A673 (cell line): ENCODE measurements at regions of chr3 and their contacts with region 1.

Region 1: GRCh38 chr3:55591888-55592287 is 104.8 kb upstream of the WNT5A start:
- DNase-seq: no peak
- H3K4me3 ChIP-seq: no peak overlapping the region
- H3K27ac ChIP-seq: no peak overlapping the region
- H3K4me1 ChIP-seq: peaks cover 12% of the 10 kb centered on the region
- H3K27me3 ChIP-seq: no peaks in the 10 kb centered on the region
- CTCF ChIP-seq: no peak

Region 2: GRCh38 chr3:54843352-54843751 is 748.5 kb before region 1 on chr3:
- CTCF ChIA-PET with region 1: interaction called, 10 read pairs
- POLR2A ChIA-PET with region 1: no interaction called
- intact Hi-C with region 1: no loop called
- DNase-seq: no peak
- H3K4me3 ChIP-seq: no peak overlapping the region
- H3K27ac ChIP-seq: no peak overlapping the region
- H3K4me1 ChIP-seq: no peaks in the 10 kb centered on the region
- H3K27me3 ChIP-seq: peaks cover 45% of the 10 kb centered on the region
- CTCF ChIP-seq: no peak